ENCODE measurements at regions of chr6 and their contacts with region 1.

Region 1: GRCh38 chr6:44074439-44075136 is 52.7 kb downstream of the MRPL14 start:
- DNase-seq: peak; percentile 61
- H3K4me3 ChIP-seq: no peak overlapping the region
- H3K27ac ChIP-seq: peak overlapping the region; percentile 21
- H3K27me3 ChIP-seq: no peaks in the 10 kb centered on the region
- CTCF ChIP-seq: peak; percentile 93

Region 2: DNA sequence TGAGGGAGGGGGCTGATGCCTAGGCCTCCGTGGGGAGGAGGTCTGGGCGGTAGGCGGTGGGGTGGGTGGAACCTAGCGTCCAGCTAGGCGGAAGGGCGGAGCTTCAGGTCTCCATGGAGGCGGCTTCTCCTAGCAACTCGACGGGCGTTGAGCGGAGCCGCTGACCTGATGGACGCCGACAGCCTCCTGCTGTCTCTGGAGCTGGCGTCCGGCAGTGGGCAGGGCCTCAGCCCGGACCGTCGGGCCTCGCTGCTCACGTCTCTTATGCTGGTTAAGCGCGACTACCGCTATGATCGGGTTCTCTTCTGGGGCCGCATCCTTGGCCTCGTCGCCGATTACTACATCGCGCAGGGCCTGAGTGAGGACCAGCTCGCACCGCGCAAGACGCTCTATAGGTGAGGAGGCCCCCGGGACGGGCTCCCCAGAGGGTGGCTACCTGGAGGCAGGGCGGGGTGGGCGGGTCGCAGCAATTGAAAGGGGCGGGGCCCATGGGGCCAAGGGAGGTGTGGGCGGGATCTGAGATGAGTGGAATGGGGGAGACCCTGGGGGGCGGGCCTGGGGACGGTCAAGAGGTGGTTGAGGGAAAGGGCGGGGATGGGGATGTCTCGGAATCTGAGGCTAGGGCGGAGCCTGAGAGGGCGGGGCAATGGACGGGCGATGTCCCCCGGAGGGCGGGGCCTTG is 429.5 kb before region 1 on chr6 and contains the start of gene RSPH9:
- CTCF ChIA-PET with region 1: interaction called, 10 read pairs
- POLR2A ChIA-PET with region 1: no interaction called
- DNase-seq: no peak
- H3K4me3 ChIP-seq: peak within 1 kb of the TSS; percentile 61
- H3K27ac ChIP-seq: peak within 1 kb of the TSS; percentile 21
- H3K27me3 ChIP-seq: no peaks in the 10 kb centered on the region
- CTCF ChIP-seq: no peak
- polyA plus RNA-seq, gene RSPH9: 0.37 and 0.51 TPM in 2 replicates

Region 3: DNA sequence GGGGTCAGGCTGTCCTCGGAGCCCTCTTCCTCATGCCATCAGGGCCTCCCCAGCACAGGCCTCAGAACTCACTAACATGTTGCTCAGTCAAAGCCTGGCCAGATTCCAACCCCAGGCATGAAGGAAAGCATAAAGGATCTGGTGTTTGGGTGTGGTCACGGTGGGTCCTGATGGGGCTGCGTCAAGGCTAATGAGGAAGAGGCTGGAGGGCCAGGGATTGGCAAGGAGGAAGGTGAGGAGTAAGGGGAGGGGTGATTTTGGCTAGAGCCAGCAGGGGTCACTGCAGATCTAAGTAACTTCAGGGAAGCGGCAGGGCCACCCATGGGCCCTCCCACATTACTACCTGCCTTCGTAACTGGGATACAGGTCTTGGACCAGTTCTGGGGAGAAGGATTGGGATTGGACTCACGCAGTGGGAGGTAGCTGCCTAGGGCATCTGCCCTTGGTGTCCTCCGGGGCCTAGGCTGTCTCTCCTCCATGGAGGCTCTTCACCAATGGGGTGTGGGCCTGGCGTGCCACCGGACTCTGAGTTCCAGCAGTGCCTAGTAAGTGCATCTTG is 350.8 kb before region 1 on chr6:
- CTCF ChIA-PET with region 1: interaction called, 20 read pairs
- POLR2A ChIA-PET with region 1: no interaction called
- DNase-seq: no peak
- H3K4me3 ChIP-seq: no peak overlapping the region
- H3K27ac ChIP-seq: no peak overlapping the region
- H3K27me3 ChIP-seq: peaks cover 8% of the 10 kb centered on the region
- CTCF ChIP-seq: peak; percentile 61

Region 4: DNA sequence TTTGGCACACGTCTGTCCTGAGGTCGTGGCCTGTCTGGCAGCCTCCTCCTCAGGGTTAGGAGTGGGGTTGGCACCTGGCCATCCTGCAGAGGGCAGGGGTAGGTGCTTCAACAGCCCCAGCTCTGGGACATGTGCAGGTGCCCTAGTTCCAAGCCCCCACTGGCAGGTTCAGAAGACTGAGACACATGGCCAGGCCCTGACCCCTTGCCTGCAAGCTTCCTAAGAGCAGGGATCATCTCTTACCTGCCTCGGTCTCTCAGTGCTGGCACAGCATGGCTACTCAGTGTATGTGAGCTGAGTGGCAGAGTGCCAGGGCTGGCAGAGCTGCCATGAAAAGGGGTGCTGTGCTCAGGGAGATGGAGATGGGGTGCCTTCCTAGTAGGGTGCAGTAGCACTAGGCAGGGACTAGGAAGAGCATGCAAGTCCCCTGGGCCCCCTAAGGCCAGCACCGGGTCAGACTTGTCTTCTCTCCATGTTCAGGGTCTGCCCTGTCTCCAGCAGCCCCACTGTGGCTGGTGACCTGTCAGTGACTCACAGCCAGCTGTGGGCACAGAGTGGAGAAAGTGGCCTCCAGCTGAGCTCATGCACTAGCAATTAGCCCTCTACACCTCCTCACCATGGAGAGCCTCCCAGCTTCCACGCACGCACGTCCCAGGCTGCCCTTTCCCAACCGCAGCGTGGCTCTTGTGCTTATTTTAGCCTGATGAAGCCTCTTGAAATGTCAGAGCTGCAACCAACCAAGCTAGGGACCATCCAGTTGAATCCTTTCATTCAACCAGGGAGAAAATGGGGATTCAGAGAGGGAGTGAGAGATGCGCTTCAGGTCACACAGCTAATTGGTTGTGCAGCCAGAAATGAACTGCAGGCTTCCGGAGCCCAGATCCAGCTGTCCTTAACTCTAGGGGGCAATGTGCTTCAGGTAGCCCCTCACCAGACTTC is 63.9 kb before region 1 on chr6:
- CTCF ChIA-PET with region 1: interaction called, 3 read pairs
- POLR2A ChIA-PET with region 1: interaction called, 14 read pairs
- DNase-seq: peak; percentile 96
- H3K4me3 ChIP-seq: peak overlapping the region; percentile 18; the same call in 1 of the 2 replicates
- H3K27ac ChIP-seq: peak overlapping the region; percentile 93
- H3K27me3 ChIP-seq: no peaks in the 10 kb centered on the region
- CTCF ChIP-seq: 0 out of 2 replicates have a peak, but pooled peaks have one; percentile 6

Region 5: DNA sequence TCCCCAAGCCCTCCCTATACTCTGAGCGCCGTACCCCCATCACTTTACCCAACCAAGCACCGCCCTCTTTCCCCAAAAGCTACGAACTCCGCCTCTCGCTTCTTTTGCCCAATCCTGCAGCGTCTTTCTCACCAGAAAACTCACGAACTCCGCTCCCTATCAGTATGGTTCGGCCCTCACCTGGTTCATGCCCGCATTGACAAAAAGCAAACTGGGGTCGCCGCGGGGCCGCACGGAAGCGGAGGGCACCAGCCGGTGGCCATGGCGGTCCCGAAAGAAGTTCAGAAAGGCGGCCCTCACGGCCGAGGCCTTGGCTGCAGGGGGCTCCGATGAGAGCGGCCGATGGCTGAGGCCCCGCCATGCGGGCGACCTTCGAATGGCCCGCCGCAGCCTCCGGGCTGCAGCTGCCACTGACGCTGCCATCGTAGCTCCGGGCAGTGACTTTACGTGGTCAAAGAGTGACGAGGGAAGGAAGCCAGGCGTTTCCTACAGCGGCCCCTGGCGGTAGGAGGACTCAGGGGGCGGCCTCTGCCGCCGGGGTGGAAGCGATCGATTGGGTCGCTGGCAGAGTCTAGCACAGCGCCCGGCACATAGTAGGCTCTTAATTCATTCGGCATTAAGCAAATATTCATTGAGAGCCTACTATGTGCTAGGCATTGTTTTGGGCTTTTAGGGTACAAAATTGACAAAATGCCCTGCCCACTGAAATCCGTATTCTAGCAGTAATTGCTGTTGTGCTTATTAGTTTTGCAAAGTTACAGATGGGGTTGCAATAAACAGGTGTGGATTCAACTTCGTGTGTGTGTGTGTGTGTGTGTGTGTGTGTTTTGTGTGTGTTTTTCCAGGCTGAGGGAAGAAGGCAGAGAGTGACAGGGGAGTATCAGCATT is 238.6 kb after region 1 on chr6 and contains the start of gene AARS2:
- CTCF ChIA-PET with region 1: no interaction called
- POLR2A ChIA-PET with region 1: no interaction called
- DNase-seq: peak; percentile 38
- H3K4me3 ChIP-seq: peak within 1 kb of the TSS; percentile 82
- H3K27ac ChIP-seq: no peak within 1 kb of the TSS
- H3K27me3 ChIP-seq: peaks cover 5% of the 10 kb centered on the region
- CTCF ChIP-seq: peak; percentile 99
- polyA plus RNA-seq, gene AARS2: 5.8 and 6.2 TPM in 2 replicates